Activated T-helper 2 cell treated with anti-CD3 and anti-CD28 coated beads, Interferon-gamma antibody, Interleukin-2, Interleukin-4, amounts not matched to agents 10 μg/mL and 5 μg/mL and 100 μg/mL, durations not matched to agents 14 hours and 24 hours and 36 hours (primary cell): ENCODE measurements at regions of chr4 and their contacts with region 1.

Region 1: DNA sequence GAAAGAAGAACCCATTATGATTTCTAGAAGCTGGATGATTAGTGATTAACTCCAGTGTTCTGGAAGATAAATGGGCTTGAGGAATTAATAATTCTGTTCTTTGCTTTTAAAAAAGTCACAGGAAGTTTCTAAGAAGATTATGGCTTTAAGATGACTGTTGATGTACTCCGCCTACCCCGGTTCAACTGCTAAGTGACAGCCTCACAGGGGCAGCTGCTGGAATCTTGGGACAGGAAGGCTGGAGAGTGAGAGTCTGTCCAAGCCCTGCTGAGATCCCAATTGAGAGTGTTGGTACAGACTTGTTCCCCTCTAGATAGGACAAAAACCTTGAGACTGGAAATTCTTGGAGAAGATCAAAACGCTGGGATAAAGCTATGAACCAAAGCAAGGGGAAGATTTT is 37.3 kb downstream of the NPY1R start:
- DNase-seq: no peak
- H3K4me3 Mint-ChIP-seq: no peak overlapping the region
- H3K27ac Mint-ChIP-seq: no peak overlapping the region
- H3K4me1 Mint-ChIP-seq: no peaks in the 10 kb centered on the region
- H3K27me3 Mint-ChIP-seq: no peaks in the 10 kb centered on the region

Region 2: DNA sequence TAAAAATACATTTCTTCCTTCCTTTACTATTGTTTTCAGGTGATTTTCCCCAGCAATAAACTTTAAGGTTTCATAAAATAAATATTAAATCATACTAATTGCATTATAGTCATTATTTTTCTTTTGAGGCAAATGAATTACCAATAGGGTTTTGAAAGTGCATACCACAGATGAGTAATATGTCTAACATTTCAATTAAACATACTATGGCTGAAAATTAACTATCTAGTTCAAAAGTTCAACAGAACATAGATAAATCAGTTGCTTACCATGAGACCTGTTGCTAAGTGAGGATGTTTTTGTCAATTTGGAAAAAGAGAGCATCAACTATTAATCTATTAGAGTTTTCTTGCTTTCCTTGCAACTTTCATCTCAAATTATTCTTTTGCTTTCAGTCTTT is 83.5 kb after region 1 on chr4:
- intact Hi-C with region 1: no loop called
- DNase-seq: no peak
- H3K4me3 Mint-ChIP-seq: no peak overlapping the region
- H3K27ac Mint-ChIP-seq: no peak overlapping the region
- H3K4me1 Mint-ChIP-seq: no peaks in the 10 kb centered on the region
- H3K27me3 Mint-ChIP-seq: no peaks in the 10 kb centered on the region

Region 3: GRCh38 chr4:164813554-164813953 is 1518.4 kb after region 1 on chr4:
- intact Hi-C with region 1: loop called (anchors 10 kb)
- DNase-seq: no peak
- H3K4me3 Mint-ChIP-seq: no peak overlapping the region
- H3K27ac Mint-ChIP-seq: no peak overlapping the region
- H3K4me1 Mint-ChIP-seq: no peaks in the 10 kb centered on the region
- H3K27me3 Mint-ChIP-seq: no peaks in the 10 kb centered on the region